Right ventricle myocardium superior (tissue), 1 donor: ENCODE measurements at regions of chr12 and their contacts with region 1.

Region 1: DNA sequence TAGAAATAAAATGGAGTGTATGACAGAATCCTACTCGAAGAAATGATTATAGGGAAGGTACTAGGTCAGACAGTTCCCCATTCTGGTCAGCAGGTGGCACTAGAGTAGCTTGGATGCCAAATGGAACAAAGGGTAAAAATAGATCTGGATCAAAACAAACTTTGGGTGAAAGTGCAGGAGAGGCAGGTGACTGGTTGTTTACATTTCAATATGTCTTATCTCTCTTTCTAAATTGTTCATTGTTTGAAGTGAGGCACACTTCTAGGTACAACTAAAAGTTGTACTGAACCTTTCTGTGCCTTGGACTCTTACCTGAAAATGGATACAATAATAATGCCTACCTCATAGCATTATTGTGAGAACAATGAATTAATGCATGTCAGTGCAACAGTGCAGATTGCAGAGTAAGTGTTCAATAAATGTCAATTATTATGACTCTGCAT is 62.0 kb upstream of the OSBPL8 start:
- DNase-seq: peak; percentile 52
- ATAC-seq: peak; percentile 96

Region 2: DNA sequence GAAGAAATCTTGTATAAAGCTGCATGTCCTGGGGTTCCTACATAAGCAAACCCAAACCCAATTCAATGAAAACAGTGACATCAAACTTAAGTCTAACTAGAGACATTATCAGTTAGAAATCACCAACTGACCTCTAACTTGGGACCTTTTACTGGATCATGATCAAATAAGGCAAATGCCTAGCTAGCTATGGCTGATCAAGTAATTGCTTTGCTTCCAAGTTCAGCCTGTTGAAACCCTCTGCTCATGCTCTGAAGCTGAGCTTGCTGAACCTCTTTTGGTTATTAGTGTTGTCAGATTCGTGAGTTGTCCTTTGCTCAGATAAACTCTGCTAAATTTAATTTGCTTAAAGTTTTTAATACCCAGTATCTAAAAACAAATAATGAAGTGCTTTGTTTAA is 171.2 kb after region 1 on chr12:
- intact Hi-C with region 1: loop called (anchors 2 kb)
- DNase-seq: no peak
- ATAC-seq: no peak

Region 3: GRCh38 chr12:76932196-76932595 is 310.6 kb after region 1 on chr12:
- intact Hi-C with region 1: loop called (anchors 5 kb)
- DNase-seq: no peak
- ATAC-seq: no peak

Region 4: GRCh38 chr12:77010691-77011548 is 389.3 kb after region 1 on chr12:
- intact Hi-C with region 1: loop called (anchors 5 kb)
- DNase-seq: peak; percentile 76
- ATAC-seq: peak; percentile 83